ENCODE measurements at regions of chr2 and their contacts with region 1.

Region 1: DNA sequence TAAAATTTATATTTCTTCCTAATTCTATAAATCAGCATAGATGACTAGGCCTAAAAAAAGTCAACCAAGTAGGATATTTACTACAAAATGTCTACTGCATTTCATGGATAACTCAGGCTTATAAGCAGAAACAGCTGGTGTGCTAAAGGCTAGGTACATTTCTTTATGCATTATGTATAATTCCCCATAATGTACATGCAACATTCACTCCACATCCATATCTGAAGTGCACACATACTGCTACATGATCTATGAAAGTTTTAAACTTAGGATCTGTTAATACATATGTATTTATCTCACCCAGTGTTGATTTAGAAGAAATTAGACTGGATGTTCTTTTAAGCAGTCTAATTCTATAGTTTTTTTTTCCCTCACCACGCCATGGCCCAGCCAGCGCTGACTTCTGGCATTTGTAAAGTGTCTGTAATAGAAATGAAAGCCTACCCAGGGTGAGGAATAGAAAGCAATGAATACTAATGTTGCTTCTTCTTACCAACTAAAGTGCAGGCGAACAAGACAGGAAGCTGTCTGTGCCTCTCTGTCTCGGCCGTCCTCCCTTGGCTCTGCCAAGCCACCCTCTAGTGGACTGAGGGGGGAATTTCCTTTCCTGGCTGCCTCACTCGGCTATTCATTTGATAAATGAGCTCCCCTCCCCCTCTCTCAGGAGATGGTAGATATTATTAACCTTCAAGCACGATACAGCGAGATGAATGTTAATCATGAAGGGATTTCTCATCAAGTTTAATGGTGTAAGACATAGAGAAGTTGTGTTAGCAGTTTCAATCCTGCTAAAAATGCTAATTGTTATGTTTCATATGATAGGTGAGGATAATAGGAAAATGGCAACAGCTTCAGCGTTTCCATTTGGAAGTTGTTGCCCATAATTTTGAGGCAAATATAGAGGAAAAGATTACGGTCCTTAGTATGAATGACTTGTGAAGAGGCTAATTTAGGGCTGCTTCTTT is 384.5 kb downstream of the MTX2 start:
- DNase-seq: no peak
- H3K4me3 ChIP-seq: no peak overlapping the region
- CTCF ChIP-seq: peak; percentile 86

Region 2: GRCh38 chr2:176110975-176111663 is 542.6 kb before region 1 on chr2:
- CTCF ChIA-PET with region 1: interaction called, 39 read pairs
- POLR2A ChIA-PET with region 1: no interaction called
- DNase-seq: no peak
- H3K4me3 ChIP-seq: no peak overlapping the region
- CTCF ChIP-seq: peak; percentile 85

Region 3: DNA sequence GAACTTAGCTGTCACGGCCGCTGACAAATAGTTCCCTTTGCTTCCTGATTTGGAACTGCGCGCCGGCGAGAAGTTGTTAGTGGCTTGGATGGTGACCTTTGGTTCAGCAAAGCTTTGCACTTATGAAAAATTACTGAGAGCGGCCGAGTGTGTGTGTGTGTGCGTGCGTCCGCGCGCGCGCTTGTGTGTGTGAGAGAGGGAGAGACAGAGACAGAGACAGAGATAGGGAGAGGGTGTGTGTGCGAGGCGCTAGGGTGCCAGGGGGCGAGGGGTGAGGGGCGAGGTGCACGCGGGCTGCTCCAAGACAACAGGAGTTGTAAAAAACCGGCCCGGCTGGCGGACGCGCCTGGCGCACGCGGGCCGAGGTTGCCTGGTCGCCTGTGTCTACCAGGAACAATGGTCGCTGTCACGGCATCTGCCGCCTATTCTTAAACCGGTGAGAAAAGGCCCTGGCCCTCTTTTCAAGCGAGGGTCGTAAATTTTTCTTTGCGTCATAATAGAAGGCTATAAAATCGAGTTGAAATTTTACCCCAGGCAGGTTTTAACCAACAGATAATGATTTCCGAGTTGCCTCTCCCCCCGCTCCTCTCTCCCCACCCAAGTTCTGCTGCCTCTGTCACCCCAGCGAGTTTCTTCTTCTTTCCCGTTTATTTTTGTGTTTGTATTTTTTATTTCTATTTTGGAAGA is 496.1 kb before region 1 on chr2:
- CTCF ChIA-PET with region 1: interaction called, 11 read pairs
- POLR2A ChIA-PET with region 1: no interaction called
- DNase-seq: no peak
- H3K4me3 ChIP-seq: peak overlapping the region; percentile 57
- CTCF ChIP-seq: no peak

Region 4: DNA sequence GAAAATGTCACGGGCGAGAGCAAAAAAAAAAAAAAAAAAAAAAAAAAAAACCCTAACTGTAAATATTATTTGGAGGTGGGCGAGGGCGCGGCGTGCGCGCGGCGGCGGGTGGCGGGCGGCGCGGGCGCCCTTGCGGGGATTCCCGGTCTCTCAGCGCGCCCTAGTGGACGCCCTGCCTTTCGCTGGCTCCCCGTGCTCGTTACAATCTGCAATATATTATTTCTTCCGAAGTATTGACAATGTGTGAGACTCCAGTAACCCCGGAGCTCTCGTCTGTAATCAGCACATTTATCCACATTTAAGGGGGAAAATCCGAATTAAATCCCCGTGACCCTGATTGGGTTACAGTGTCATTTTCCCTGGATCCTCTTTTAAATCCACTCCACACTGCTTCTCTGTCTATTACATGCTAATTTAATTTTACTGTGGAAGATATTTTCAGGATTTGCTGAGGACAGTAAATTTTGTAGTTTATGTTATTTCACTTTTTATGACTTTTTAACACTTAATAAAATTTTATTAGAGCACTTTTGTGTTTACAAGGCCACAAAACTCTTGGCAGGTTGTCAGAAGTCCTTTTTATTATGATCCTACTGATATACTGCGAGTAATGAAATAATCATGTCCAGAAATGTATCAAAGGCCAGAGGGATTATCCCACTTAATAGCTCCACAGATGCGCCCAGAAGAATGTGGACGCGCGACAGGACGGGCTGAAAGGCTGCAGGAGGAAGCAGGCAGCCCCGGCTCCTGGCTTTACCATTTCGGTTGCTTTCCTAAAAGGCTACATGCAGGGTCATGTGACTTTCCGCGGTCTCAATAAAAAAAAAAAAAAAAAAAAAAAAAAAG is 15.4 kb before region 1 on chr2:
- CTCF ChIA-PET with region 1: interaction called, 202 read pairs
- POLR2A ChIA-PET with region 1: interaction called, 6 read pairs
- DNase-seq: no peak
- H3K4me3 ChIP-seq: peak overlapping the region; percentile 66
- CTCF ChIP-seq: peak; percentile 67

Region 5: GRCh38 chr2:176682278-176682677 is 28.5 kb after region 1 on chr2:
- CTCF ChIA-PET with region 1: interaction called, 38 read pairs
- POLR2A ChIA-PET with region 1: no interaction called
- DNase-seq: no peak
- H3K4me3 ChIP-seq: no peak overlapping the region
- CTCF ChIP-seq: no peak

Region 6: DNA sequence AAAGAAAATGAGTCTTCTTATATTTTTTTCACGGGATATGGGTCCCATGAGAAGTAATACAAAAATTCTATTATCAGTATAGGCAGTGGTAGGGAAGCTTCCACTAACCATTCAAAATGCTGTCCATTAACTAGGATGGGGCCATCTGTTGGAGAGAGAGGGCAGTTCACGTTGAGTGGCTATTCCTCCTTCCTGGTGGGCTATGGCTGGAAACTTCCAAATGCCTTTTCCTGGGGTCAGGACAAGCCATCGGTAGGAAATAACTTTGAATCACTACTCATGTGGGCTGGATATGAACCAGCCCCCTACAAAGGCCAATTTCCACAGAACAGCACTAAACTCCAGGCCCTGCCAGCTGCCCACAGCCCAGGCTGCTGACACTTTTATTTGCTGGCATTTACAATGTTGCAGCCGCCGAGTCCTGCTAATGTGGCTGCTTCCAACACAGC is 402.7 kb after region 1 on chr2:
- CTCF ChIA-PET with region 1: no interaction called
- POLR2A ChIA-PET with region 1: no interaction called
- DNase-seq: no peak
- H3K4me3 ChIP-seq: no peak overlapping the region
- CTCF ChIP-seq: no peak

Region 7: DNA sequence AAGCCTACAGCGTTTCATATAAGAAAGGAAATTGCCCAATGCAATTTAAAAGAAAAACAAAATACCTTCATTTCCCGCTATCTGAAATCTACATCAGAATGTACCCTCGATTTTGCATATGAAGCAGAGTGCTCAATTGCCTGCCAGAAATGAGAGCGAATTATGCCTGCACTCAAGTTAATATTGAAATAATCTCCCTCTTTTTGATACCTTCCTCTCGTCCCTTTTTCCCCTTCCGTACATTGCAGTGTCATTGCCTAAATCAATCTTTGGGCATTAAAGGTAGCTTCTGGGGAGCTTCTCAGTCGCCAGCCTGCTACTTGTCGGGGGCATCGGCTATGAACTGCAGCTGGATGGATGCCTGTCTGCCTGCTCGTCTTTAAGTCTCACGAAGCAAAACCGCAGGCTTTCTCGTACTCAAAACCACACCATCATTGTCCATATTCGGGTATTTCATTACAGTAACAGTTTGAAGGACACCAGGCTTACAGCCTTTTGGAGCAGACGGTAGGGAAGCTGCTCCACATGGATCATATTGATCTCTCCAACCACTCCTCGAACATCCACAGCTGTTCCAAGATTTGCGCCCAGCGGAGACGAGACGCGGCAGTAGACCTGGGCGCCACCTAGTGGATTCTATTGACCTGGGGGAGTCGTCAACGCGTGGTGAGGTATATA is 494.9 kb after region 1 on chr2:
- CTCF ChIA-PET with region 1: interaction called, 28 read pairs
- POLR2A ChIA-PET with region 1: no interaction called
- DNase-seq: no peak
- H3K4me3 ChIP-seq: peak overlapping the region; percentile 54
- CTCF ChIP-seq: peak; percentile 91

Measured in AG04449 (cell line).